ENCODE measurements at regions of chr10 and their contacts with region 1.

Region 1: DNA sequence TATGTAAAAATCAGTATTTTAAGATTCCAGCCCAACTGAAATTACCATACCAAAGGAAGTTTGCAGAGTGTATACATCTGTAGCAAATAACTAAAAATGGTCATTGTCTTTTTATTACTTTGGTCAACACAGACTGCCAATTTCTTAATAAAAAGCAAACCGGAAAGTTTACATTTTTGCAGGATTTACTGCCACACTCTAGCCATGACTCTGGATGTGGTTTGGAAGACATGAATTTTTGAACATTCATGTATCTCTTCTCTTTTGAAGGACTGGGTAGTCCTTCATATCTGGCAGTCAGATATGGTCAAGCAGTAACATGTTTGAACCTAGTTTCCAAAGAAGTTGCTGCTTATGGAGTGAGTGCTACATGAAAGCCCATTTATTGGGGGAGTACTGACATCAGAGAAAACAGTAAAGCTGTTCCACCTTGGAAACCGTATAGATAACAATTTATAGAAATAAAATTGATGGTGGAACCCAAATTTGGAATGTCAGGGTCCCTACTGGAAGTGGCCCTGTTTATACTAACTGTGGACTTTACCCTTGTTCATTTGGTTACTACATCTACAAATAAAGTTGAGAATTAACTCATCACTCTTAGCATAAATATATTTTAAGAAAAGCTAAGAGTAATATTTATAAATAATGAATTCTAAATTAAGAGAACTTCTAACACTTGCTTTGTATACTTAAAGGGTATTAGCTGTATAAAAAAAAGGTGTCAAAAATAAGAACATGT is 84.6 kb downstream of the ZMYND11 start:
- DNase-seq: no peak
- H3K4me3 ChIP-seq: no peak overlapping the region
- H3K4me3 Mint-ChIP-seq: no peak overlapping the region
- H3K27ac ChIP-seq: no peak overlapping the region
- H3K27ac Mint-ChIP-seq: no peak overlapping the region
- H3K4me1 ChIP-seq: peaks cover 13% of the 10 kb centered on the region
- H3K4me1 Mint-ChIP-seq: peaks cover 23 to 35% (median 27%) of the 10 kb centered on the region in 4 donors
- H3K27me3 ChIP-seq: no peaks in the 10 kb centered on the region
- H3K27me3 Mint-ChIP-seq: no peaks in the 10 kb centered on the region

Region 2: DNA sequence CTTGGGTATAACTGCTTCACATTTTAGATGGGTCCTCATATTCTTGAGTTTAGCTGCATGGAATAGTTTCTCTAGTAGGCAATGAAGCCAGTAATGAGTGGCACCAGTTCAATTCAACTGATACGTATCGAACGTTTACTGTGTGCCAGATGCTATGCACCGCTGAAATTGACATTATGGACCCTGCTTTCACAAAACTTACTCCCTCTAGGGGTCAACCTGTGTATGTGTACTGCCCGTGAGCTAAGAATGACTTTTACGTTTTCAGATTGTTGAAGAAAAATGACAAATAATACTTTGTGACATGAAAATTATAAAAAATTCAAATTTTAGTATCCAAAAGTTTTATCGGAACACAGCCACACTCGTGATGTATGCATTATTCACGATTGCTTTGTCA is 10.8 kb after region 1 on chr10:
- CTCF ChIA-PET with region 1: interaction called, 13 read pairs
- POLR2A ChIA-PET with region 1: no interaction called
- intact Hi-C with region 1: no loop called
- DNase-seq: peak in 1 of 5 donors; percentile 0
- H3K4me3 ChIP-seq: no peak overlapping the region
- H3K4me3 Mint-ChIP-seq: no peak overlapping the region
- H3K27ac ChIP-seq: no peak overlapping the region
- H3K27ac Mint-ChIP-seq: no peak overlapping the region
- H3K4me1 ChIP-seq: no peaks in the 10 kb centered on the region
- H3K4me1 Mint-ChIP-seq: peaks cover 13 to 16% (median 14%) of the 10 kb centered on the region in 4 donors
- H3K27me3 ChIP-seq: no peaks in the 10 kb centered on the region
- H3K27me3 Mint-ChIP-seq: no peaks in the 10 kb centered on the region